ENCODE measurements at regions of chr4 and their contacts with region 1.

Region 1: DNA sequence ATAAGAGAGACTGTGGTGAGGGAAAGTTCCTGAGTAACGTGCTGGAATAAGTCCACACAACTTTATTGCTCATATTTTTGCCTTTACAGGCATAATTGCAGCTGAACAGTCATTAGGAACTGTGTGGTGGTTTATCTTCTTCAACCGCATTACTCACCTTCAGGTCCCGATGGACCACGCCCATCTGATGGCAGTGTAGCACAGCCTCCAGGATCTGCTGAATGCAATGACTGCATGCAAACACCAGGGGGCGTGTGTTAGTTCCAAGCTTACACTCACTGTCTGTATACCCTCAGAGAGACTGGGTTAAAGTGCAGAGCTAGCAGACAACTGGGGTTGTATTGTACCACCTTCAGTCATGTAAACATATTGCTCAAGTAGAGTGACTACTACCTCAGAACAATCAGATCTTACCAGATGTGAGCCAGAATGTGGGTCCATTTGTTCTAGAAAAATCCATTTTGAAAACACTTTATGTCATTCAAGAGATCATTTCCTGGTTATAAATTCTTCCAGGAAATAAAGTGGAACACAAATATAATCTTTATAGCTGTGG is 214.0 kb downstream of the CAMK2D start:
- DNase-seq: peak; percentile 85
- ATAC-seq: peak; percentile 98

Region 2: GRCh38 chr4:113756005-113756410 is 208.4 kb after region 1 on chr4:
- intact Hi-C with region 1: loop called (anchors 5 kb)
- DNase-seq: no peak
- ATAC-seq: no peak

Measured in left ventricle myocardium superior (tissue), 1 donor.